Sciatic nerve (tissue), 2 donors: ENCODE measurements at regions of chr3 and their contacts with region 1.

Region 1: DNA sequence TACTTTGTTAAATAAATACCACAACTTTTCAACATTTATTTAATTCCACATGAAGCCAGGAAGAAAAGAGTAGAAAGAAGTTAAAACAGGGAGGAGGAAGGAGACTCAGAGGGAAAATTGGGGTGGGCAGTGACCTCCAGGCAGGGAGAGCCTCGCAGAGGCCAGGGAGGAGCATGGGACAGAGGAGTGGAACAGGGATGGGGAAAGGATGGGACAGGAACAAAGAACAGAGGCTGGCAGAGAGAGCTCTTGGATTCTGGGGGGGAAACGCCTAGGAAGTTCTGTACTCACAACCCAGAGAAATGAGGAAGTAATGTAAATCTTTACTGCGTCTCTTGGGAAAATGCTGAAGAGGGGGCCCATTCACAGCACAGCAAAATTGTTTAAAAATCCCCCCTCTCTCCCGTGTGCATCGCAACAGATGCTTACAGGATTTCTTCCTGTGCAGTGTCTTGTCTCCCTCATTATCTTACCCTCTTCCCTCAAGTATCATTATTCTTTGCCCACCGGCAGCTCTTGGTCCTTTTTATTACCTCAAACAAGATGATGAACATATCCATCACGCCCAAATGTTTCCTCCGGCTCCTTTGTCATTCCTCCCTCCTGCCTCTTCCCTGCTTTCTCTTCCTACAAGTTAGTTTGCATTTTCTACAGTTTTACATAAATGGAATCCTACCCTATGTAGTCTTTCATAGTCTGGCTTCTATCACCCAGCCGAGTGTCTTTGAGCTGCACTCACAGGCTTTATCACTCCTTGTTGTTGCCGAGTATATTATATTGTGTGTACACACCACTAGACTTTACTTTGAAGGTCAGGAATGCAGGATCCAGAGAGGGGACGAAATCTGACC is 65.5 kb downstream of the ARHGAP31 start:
- DNase-seq: no peak
- ATAC-seq: peak; percentile 80

Region 2: DNA sequence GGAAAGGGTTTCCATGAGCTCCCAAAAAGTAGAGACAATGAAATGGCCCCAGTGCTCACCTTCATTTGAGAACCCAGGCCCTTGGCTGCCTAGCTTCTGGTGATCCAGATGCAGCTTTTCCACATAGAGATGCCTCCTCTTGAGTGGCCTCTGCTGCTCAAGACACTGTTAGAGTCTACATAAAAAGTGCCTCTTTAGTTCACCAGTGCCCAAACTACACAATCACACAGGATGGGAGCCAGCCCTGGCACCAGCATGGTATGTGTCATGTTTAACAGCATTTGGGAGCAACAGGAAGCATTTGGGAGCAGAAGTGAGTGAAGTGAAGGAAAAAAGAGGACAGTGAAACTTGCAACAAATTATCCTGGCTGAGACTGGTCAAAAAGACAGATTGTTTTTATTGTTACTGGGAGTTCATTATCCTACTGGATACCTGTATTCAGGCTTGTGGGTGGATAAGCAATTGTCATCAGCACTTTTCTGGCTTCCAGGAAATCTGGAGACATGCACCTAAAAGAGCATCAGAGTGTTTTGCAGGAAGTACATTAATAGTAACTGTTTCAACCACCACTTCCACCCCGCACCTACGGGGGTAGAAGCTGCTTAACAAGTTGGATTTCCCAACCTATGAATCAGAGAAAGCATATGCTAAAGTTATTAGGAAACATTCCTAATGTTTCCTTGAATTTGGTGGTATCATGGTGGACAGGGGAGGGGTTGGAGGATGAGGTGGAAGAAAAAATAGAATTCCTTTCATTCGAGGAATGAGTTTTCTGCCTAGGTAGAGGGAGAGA is 741.3 kb before region 1 on chr3:
- intact Hi-C with region 1: no loop called
- DNase-seq: no peak
- ATAC-seq: no peak

Region 3: DNA sequence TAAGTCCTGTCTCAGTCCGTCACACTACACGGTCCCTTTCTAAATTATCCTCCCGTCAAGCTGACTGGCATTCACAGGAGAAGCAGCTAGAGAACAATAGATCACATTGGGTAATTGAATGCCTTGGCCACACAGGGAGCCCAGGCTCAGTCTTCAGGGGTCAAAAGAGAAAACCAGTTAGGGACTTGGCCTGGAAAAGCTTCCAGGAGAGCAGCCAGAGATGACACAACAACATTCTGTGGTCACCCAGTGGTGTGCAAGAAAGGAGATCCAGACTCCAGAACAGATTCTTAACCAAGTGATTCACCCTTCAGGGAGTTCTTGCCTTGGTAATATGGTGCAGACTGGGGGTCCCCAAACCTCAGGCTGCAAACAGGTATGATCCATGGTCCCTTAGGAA is 49.6 kb before region 1 on chr3:
- intact Hi-C with region 1: no loop called
- DNase-seq: no peak
- ATAC-seq: peak; percentile 95

Region 4: DNA sequence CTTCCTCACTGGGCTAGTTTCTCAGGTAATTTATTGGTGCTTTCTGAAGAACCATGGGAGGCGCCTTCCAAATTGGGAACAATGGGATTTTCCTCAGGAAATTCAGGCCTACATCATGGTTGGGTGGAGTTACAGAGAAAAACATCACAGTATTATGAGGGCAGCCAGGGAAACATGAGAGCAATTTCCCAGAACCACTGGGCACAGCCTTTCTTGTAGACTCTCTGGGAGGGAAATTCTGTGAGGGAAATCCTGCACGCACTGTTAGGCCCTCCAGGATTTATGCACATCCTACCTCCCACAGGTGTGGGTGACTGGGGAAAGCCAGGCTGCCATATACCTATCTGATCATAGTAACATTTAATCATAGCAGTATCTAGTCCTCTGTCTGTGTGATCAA is 287.5 kb after region 1 on chr3:
- intact Hi-C with region 1: loop called (anchors 5 kb)
- DNase-seq: no peak
- ATAC-seq: no peak

Region 5: DNA sequence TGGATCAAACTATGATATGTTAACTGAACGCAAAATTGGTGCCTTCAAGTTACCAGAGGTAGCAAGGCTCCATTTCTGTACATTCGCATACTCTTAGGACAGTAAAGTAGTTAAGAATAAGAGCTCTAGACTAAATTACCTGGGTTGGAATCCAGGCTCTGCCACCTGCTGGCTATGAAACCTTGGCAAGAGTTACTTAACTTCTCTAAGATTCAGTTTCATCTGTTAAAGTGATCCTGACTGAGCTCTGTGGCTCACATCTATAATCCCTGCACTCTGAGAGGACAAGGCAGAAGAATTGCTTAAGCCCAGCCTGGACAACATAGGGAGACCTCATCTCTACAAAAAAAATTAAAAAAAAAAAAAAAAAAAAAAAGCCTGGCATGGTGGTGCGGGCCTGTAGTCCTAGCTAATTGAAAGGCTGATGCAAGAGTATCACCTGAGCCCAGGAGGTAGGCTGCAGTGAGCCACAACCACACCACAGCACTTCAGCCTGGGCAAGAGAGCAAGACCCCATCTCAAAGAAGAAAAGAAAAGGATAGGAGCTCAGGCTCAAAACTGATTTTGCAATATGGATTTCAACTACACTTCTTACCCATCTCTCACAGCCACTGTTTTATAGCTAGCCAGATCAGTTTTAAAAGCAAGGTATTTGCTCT is 713.3 kb after region 1 on chr3:
- intact Hi-C with region 1: loop called (anchors 5 kb)
- DNase-seq: no peak
- ATAC-seq: no peak